Tibial artery (tissue), 4 donors: ENCODE measurements at regions of chr7 and their contacts with region 1.

Region 1: DNA sequence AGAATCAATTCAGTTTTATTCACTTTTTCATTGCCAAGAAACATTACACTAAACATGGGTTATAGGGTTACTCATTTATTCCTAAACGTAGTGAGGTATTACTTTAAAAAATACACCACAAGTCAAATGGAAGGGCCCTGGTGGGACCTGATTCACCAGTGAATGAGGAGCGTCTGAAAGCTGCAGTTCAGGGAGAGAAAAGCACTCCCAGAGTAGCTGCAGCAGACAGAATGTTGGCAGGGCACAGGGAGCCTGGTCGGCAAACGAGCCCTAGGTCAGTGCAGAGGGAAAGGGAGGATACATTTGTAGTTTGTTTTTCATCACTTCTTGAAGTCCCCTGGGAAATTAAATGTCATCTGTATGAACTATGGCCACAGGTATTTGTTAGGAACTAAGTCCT is 361.7 kb upstream of the ETV1 start:
- DNase-seq: no peak
- H3K4me3 ChIP-seq: no peak overlapping the region
- H3K27ac ChIP-seq: no peak overlapping the region
- H3K4me1 ChIP-seq: no peaks in the 10 kb centered on the region
- H3K27me3 ChIP-seq: no peaks in the 10 kb centered on the region
- CTCF ChIP-seq: no peak

Region 2: DNA sequence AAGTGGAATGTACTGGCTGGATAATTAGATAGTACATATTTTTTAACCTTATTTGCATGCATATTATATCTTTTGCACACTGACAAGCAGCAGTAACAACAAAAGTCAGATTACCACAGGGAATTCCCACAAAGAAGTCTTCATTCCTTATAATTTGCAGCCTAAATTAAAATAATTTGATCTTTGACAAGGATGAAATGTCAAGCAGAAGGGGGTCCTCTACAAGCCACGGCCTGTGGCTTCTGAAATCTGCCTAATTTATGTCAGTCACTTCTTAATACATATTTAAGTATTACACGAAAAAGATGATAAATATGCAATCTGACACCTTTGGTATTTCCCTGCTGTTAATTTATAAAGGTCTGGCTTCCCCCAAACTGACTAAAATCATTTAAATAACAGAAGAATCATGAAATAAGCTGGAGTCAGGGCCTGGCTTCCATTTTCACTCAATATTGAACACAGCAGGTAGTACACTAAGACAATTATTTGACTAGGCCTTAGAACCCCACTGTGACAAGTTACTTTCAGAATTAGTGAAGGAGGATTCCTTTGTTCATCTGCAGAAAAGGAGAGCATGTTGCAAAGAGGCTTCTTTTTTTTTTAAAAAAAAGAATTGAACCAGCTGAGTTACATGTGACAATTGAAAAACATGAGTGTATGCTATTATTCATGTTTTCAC is 10.6 kb before region 1 on chr7:
- intact Hi-C with region 1: loop called (anchors 1 kb)
- DNase-seq: no peak
- H3K4me3 ChIP-seq: no peak overlapping the region
- H3K27ac ChIP-seq: no peak overlapping the region
- H3K4me1 ChIP-seq: no peaks in the 10 kb centered on the region
- H3K27me3 ChIP-seq: no peaks in the 10 kb centered on the region
- CTCF ChIP-seq: no peak

Region 3: GRCh38 chr7:14368285-14368684 is 17.1 kb after region 1 on chr7:
- intact Hi-C with region 1: no loop called
- DNase-seq: no peak
- H3K4me3 ChIP-seq: no peak overlapping the region
- H3K27ac ChIP-seq: no peak overlapping the region
- H3K4me1 ChIP-seq: no peaks in the 10 kb centered on the region
- H3K27me3 ChIP-seq: no peaks in the 10 kb centered on the region
- CTCF ChIP-seq: no peak

Region 4: GRCh38 chr7:14438366-14438765 is 87.2 kb after region 1 on chr7:
- intact Hi-C with region 1: no loop called
- DNase-seq: no peak
- H3K4me3 ChIP-seq: no peak overlapping the region
- H3K27ac ChIP-seq: no peak overlapping the region
- H3K4me1 ChIP-seq: no peaks in the 10 kb centered on the region
- H3K27me3 ChIP-seq: no peaks in the 10 kb centered on the region
- CTCF ChIP-seq: no peak